ENCODE measurements at regions of chr21 and their contacts with region 1.

Region 1: GRCh38 chr21:29477941-29478340 is 179.2 kb downstream of the BACH1 start:
- DNase-seq: no peak
- ATAC-seq: no peak
- H3K4me3 ChIP-seq: no peak overlapping the region
- H3K4me3 Mint-ChIP-seq: no peak overlapping the region
- H3K27ac ChIP-seq: no peak overlapping the region
- H3K27ac Mint-ChIP-seq: peak overlapping the region in 1 of 9 donors; percentile 5
- H3K4me1 ChIP-seq: no peaks in the 10 kb centered on the region
- H3K4me1 Mint-ChIP-seq: peaks cover 3 to 18% (median 11%) of the 10 kb centered on the region in 7 donors
- H3K27me3 ChIP-seq: no peaks in the 10 kb centered on the region
- H3K27me3 Mint-ChIP-seq: no peaks in the 10 kb centered on the region

Region 2: DNA sequence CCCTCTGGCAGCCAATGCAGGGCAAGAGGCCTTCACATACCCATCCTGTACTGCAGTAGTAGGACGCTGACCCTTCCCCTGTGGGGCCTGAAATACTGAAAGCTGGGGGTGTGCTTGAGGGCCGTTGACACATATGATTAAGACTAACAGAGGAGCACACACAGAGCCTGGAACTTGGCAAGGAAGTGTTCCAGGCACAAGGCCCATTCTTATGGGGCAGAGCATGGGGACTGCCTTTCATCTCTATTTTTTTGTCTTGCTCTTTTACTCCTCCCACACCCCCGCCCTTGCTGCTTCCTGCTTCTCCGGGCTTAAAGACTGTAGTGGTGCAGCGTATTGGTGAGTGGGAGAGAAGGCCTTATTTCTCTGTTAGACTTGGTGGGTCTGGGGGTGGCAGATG is 41.8 kb before region 1 on chr21:
- CTCF ChIA-PET with region 1: no interaction called
- POLR2A ChIA-PET with region 1: no interaction called
- intact Hi-C with region 1: loop called in 1 of 2 experiments (anchors 1 kb)
- DNase-seq: peak in 8 of 9 donors; percentile 28 to 69 (median 54)
- ATAC-seq: peak; percentile 90
- H3K4me3 ChIP-seq: peak overlapping the region; percentile 41
- H3K4me3 Mint-ChIP-seq: peak overlapping the region; percentile 80 to 91 (median 88)
- H3K27ac ChIP-seq: peak overlapping the region; percentile 63
- H3K27ac Mint-ChIP-seq: peak overlapping the region; percentile 81 to 98 (median 94)
- H3K4me1 ChIP-seq: peaks cover 10 to 17% of the 10 kb centered on the region in 2 donors
- H3K4me1 Mint-ChIP-seq: peaks cover 12 to 55% (median 34%) of the 10 kb centered on the region in 7 donors
- H3K27me3 ChIP-seq: no peaks in the 10 kb centered on the region
- H3K27me3 Mint-ChIP-seq: no peaks in the 10 kb centered on the region

Measured in naive thymus-derived CD4-positive, alpha-beta T cell (primary cell).